A673 (cell line): ENCODE measurements at regions of chr12 and their contacts with region 1.

Region 1: GRCh38 chr12:1795785-1796514 is 24.4 kb upstream of the LRTM2 start:
- DNase-seq: peak; percentile 95
- H3K4me3 ChIP-seq: peak overlapping the region; percentile 34
- H3K27ac ChIP-seq: no peak overlapping the region
- H3K4me1 ChIP-seq: peaks cover 4% of the 10 kb centered on the region
- H3K27me3 ChIP-seq: no peaks in the 10 kb centered on the region
- CTCF ChIP-seq: peak; percentile 84

Region 2: DNA sequence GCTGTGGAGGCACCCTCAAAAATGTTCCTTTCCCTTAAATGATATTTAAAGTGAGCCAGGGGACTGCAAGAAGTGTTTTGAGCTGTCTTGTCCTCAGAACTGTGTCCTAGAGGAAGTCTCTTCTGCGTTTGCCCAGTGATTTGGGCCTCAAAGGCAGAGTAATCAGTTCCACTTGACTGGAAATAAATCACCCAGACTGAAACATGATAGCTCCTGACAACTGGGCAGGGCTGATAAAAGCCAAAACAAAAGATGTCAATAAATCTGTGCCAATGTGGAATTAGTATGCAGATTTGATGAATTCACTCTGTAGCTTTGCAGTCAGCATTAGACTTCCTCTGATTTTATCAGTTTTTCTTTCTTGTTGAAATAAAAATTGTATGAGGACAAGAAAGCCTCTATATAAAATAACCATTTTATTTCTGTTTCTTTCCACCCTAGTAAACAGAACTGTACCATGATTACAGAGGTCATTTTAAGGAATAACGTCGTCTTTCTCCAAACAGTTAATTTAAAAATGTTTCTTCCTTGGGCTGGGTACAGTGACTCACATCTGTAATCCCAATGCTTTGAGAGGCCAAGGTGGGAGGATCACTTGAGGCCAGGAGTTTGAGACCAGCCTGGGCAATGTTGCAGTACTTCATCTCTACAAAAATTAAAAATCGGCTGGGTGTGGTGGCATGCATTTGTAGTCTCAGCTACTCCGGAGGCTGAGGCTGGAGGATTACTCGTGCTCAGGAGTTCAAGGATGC is 624.1 kb before region 1 on chr12:
- CTCF ChIA-PET with region 1: no interaction called
- POLR2A ChIA-PET with region 1: no interaction called
- intact Hi-C with region 1: no loop called
- DNase-seq: peak; percentile 85
- H3K4me3 ChIP-seq: no peak overlapping the region
- H3K27ac ChIP-seq: peak overlapping the region; percentile 56
- H3K4me1 ChIP-seq: peaks cover 21% of the 10 kb centered on the region
- H3K27me3 ChIP-seq: no peaks in the 10 kb centered on the region
- CTCF ChIP-seq: no peak

Region 3: GRCh38 chr12:1634590-1635191 is 161.3 kb before region 1 on chr12:
- CTCF ChIA-PET with region 1: interaction called, 27 read pairs
- POLR2A ChIA-PET with region 1: no interaction called
- intact Hi-C with region 1: loop called (anchors 5 kb)
- DNase-seq: peak; percentile 89
- H3K4me3 ChIP-seq: no peak overlapping the region
- H3K27ac ChIP-seq: no peak overlapping the region
- H3K4me1 ChIP-seq: peaks cover 6% of the 10 kb centered on the region
- H3K27me3 ChIP-seq: no peaks in the 10 kb centered on the region
- CTCF ChIP-seq: peak; percentile 97

Region 4: GRCh38 chr12:1655225-1655788 is 140.6 kb before region 1 on chr12:
- CTCF ChIA-PET with region 1: interaction called, 86 read pairs
- POLR2A ChIA-PET with region 1: interaction called, 3 read pairs
- intact Hi-C with region 1: loop called (anchors 1 kb)
- DNase-seq: no peak
- H3K4me3 ChIP-seq: no peak overlapping the region
- H3K27ac ChIP-seq: no peak overlapping the region
- H3K4me1 ChIP-seq: no peaks in the 10 kb centered on the region
- H3K27me3 ChIP-seq: no peaks in the 10 kb centered on the region
- CTCF ChIP-seq: no peak

Region 5: GRCh38 chr12:1842183-1842904 is 46.4 kb after region 1 on chr12:
- CTCF ChIA-PET with region 1: no interaction called
- POLR2A ChIA-PET with region 1: no interaction called
- intact Hi-C with region 1: no loop called
- DNase-seq: no peak
- H3K4me3 ChIP-seq: no peak overlapping the region
- H3K27ac ChIP-seq: no peak overlapping the region
- H3K4me1 ChIP-seq: peaks cover 49% of the 10 kb centered on the region
- H3K27me3 ChIP-seq: no peaks in the 10 kb centered on the region
- CTCF ChIP-seq: no peak

Region 6: GRCh38 chr12:1939801-1940607 is 144.1 kb after region 1 on chr12:
- CTCF ChIA-PET with region 1: interaction called, 34 read pairs
- POLR2A ChIA-PET with region 1: no interaction called
- intact Hi-C with region 1: loop called (anchors 1 kb)
- DNase-seq: peak; percentile 85
- H3K4me3 ChIP-seq: no peak overlapping the region
- H3K27ac ChIP-seq: no peak overlapping the region
- H3K4me1 ChIP-seq: peaks cover 4% of the 10 kb centered on the region
- H3K27me3 ChIP-seq: no peaks in the 10 kb centered on the region
- CTCF ChIP-seq: peak; percentile 99

Region 7: GRCh38 chr12:2034633-2035430 is 238.9 kb after region 1 on chr12:
- CTCF ChIA-PET with region 1: interaction called, 3 read pairs
- POLR2A ChIA-PET with region 1: no interaction called
- intact Hi-C with region 1: loop called (anchors 10 kb)
- DNase-seq: peak; percentile 91
- H3K4me3 ChIP-seq: peak overlapping the region; percentile 13
- H3K27ac ChIP-seq: no peak overlapping the region
- H3K4me1 ChIP-seq: peaks cover 11% of the 10 kb centered on the region
- H3K27me3 ChIP-seq: peaks cover 34% of the 10 kb centered on the region
- CTCF ChIP-seq: peak; percentile 81

Region 8: GRCh38 chr12:2583091-2583497 is 787.1 kb after region 1 on chr12:
- CTCF ChIA-PET with region 1: no interaction called
- POLR2A ChIA-PET with region 1: no interaction called
- intact Hi-C with region 1: loop called (anchors 5 kb)
- DNase-seq: peak; percentile 65
- H3K4me3 ChIP-seq: no peak overlapping the region
- H3K27ac ChIP-seq: no peak overlapping the region
- H3K4me1 ChIP-seq: no peaks in the 10 kb centered on the region
- H3K27me3 ChIP-seq: peaks cover 14% of the 10 kb centered on the region
- CTCF ChIP-seq: peak; percentile 81